Heart left ventricle (tissue), 16 donors: ENCODE measurements at regions of chr2 and their contacts with region 1.

Region 1: DNA sequence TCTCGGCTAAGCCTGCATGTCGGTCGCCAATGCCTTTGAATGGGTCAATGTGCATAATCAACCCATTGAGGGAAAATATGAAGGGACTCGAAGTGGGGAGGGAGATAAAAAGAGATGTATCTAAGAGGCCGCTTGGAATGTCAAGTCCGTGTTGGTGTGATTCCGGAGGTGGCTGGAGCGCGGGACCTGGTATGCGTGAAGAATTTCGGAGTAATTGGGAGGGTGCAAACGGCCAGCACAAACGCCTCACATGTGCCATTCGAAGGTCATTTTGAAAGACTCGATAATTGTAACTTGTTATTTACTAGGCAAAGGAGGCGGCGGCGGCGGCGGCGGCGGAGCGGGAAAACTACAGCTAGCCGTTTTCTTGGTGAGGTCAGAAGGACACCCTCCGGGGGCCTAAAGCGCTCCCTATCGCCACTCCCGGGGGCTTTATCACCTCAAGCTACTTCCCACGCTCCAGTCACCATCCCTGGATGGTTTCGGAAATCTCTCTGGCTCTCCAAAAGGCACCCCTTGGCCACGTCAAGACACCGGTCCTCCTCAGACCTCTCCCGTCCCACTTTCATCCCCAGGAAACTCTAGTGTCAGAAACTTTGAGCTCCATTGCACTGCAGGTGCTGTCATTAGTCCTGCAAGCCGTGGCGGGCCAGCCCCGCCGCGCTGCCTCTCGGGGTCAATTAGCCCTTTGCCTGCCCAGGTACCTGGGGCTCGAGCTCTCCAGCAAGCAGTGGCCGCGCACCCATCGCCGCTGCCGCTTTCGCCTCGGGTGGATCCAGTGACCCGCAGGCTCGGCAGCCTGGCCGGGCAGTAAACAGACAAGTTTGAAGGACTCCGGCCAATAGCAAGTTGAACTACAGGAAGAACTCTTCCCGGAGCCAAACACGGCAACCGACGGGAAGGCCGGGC is 1.5 kb downstream of the ERBB4 start:
- DNase-seq: peak in 4 of 5 donors; percentile 12 to 35 (median 28)
- ATAC-seq: peak in 3 of 4 donors; percentile 19 to 33 (median 30)
- H3K4me3 ChIP-seq: peak overlapping the region; percentile 32 to 73 (median 61)
- H3K27ac ChIP-seq: peak overlapping the region; percentile 38 to 83 (median 66)
- H3K4me1 ChIP-seq: peaks cover 0 to 38% (median 3%) of the 10 kb centered on the region in 12 donors
- H3K27me3 ChIP-seq: peaks cover 0 to 64% (median 9%) of the 10 kb centered on the region in 9 donors
- CTCF ChIP-seq: no peak
- POLR2A ChIP-seq: no peak

Region 2: GRCh38 chr2:211745295-211746097 is 791.6 kb before region 1 on chr2:
- intact Hi-C with region 1: loop called in 2 of 10 experiments (anchors 5 to 10 kb)
- DNase-seq: peak in 4 of 5 donors; percentile 22 to 48 (median 39)
- ATAC-seq: peak; percentile 85 to 94 (median 86)
- H3K4me3 ChIP-seq: no peak overlapping the region
- H3K27ac ChIP-seq: no peak overlapping the region
- H3K4me1 ChIP-seq: peaks cover 0 to 10% (median 0%) of the 10 kb centered on the region in 12 donors
- H3K27me3 ChIP-seq: no peaks in the 10 kb centered on the region
- CTCF ChIP-seq: peak; percentile 69 to 84 (median 78)
- POLR2A ChIP-seq: no peak

Region 3: DNA sequence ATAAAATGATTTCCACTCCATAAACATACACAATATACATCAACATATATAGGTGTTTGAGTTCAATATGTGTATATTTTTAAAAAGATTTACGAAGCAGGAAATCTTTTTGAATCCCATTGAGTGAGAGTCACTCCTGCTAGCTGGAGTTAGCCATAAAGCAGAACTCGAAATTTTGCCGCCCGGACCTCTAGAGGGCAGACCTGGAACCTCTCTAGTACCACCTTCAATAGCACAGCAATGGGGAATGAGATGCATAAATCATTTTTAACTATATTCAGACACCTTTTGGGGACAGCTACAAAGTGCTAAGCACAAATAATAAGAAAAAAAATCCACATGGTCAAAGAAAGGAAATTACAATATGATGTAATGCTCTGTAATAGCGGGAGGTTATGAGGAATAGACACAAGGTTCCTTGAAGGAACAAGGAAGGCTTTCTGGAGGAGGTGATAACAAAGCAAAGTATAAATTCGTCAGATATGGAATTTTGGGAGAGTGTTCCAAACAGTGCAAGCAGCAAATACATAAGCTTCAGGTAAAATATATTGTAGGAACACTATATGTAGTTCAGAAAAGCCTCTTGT is 531.9 kb before region 1 on chr2:
- intact Hi-C with region 1: loop called in 3 of 10 experiments (anchors 10 kb)
- DNase-seq: peak in 3 of 5 donors; percentile 20 to 31 (median 30)
- ATAC-seq: peak in 3 of 4 donors; percentile 47 to 66 (median 50)
- H3K4me3 ChIP-seq: no peak overlapping the region
- H3K27ac ChIP-seq: no peak overlapping the region
- H3K4me1 ChIP-seq: no peaks in the 10 kb centered on the region
- H3K27me3 ChIP-seq: no peaks in the 10 kb centered on the region
- CTCF ChIP-seq: peak in 11 of 12 donors; percentile 21 to 55 (median 41)
- POLR2A ChIP-seq: no peak

Region 4: GRCh38 chr2:212147921-212148513 is 389.1 kb before region 1 on chr2:
- intact Hi-C with region 1: loop called in 9 of 10 experiments (anchors 5 to 10 kb)
- DNase-seq: no peak
- ATAC-seq: no peak
- H3K4me3 ChIP-seq: no peak overlapping the region
- H3K27ac ChIP-seq: no peak overlapping the region
- H3K4me1 ChIP-seq: peaks cover 0 to 5% (median 0%) of the 10 kb centered on the region in 12 donors
- H3K27me3 ChIP-seq: no peaks in the 10 kb centered on the region
- CTCF ChIP-seq: peak in 11 of 12 donors; percentile 6 to 56 (median 41)
- POLR2A ChIP-seq: no peak

Region 5: GRCh38 chr2:212157012-212157411 is 380.1 kb before region 1 on chr2:
- intact Hi-C with region 1: loop called in 3 of 10 experiments (anchors 10 kb)
- DNase-seq: no peak
- ATAC-seq: no peak
- H3K4me3 ChIP-seq: no peak overlapping the region
- H3K27ac ChIP-seq: no peak overlapping the region
- H3K4me1 ChIP-seq: no peaks in the 10 kb centered on the region
- H3K27me3 ChIP-seq: no peaks in the 10 kb centered on the region
- CTCF ChIP-seq: no peak
- POLR2A ChIP-seq: no peak

Region 6: DNA sequence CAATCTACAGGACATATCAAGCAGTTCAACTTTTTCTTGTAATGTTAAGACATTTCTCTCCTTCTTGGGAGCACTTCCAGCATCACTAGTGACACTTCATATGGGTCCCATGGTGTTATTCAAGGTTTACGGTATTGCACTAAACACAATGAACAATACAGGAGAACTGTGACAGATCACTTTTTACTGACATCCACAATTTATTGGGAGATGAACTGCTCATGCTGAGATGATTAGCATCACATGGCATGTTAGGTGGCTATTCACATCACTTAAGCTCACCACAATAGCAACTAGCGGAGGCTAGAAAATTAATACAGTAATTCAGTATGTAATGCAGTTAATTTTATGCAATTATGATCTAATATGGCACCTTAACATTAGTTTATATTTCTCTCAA is 262.9 kb before region 1 on chr2:
- intact Hi-C with region 1: loop called in 1 of 10 experiments (anchors 10 kb)
- DNase-seq: no peak
- ATAC-seq: no peak
- H3K4me3 ChIP-seq: no peak overlapping the region
- H3K27ac ChIP-seq: no peak overlapping the region
- H3K4me1 ChIP-seq: no peaks in the 10 kb centered on the region
- H3K27me3 ChIP-seq: no peaks in the 10 kb centered on the region
- CTCF ChIP-seq: no peak
- POLR2A ChIP-seq: no peak

Region 7: GRCh38 chr2:212359425-212360067 is 177.5 kb before region 1 on chr2:
- intact Hi-C with region 1: loop called in 1 of 10 experiments (anchors 10 kb)
- DNase-seq: no peak
- ATAC-seq: no peak
- H3K4me3 ChIP-seq: no peak overlapping the region
- H3K27ac ChIP-seq: no peak overlapping the region
- H3K4me1 ChIP-seq: peaks cover 0 to 8% (median 0%) of the 10 kb centered on the region in 12 donors
- H3K27me3 ChIP-seq: no peaks in the 10 kb centered on the region
- CTCF ChIP-seq: no peak
- POLR2A ChIP-seq: no peak

Region 8: GRCh38 chr2:212409560-212409959 is 127.5 kb before region 1 on chr2:
- intact Hi-C with region 1: no loop called
- DNase-seq: no peak
- ATAC-seq: no peak
- H3K4me3 ChIP-seq: no peak overlapping the region
- H3K27ac ChIP-seq: no peak overlapping the region
- H3K4me1 ChIP-seq: no peaks in the 10 kb centered on the region
- H3K27me3 ChIP-seq: no peaks in the 10 kb centered on the region
- CTCF ChIP-seq: no peak
- POLR2A ChIP-seq: no peak

Region 9: DNA sequence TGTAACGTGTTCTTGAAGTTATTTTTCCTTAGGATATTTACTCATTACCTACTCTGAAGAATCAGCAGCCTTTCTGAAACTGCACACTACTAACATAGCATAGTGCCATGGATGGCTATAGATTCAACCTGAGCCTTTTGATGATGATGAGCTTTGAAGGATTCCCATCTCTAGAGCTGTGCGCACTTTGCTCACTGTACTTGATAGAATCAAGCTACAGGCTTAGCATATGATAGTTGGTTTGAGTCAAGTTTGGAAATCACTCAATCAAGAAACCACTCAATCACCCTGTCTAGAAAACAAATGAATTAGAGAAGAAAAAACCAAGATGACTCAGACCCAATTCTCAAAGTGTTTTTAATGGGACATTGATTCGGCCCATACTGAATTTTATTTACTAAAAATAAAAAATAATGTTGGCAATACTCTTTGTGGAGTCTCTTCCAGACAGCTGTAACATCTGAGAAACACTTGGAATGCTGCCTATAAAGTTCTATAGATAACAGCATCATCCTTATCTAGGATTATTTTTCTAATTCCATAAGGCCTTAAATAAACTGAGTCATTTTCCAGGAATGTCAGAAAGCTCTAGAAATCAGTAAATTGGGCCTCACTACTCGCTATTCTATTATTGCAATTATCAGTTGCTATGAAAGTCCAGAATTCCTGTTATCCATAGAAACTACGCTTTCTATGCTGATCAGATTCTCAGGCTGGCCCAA is 260.6 kb after region 1 on chr2:
- intact Hi-C with region 1: no loop called
- DNase-seq: no peak
- ATAC-seq: no peak
- H3K4me3 ChIP-seq: no peak overlapping the region
- H3K27ac ChIP-seq: no peak overlapping the region
- H3K4me1 ChIP-seq: peaks cover 0 to 5% (median 0%) of the 10 kb centered on the region in 12 donors
- H3K27me3 ChIP-seq: no peaks in the 10 kb centered on the region
- CTCF ChIP-seq: no peak
- POLR2A ChIP-seq: no peak